GM18951 (cell line): ENCODE measurements at regions of chr11 and their contacts with region 1.

Region 1: GRCh38 chr11:93921695-93922468 is 71.5 kb upstream of the VSTM5 start:
- POLR2A ChIP-seq: no peak

Region 2: GRCh38 chr11:94493281-94494125 is 571.6 kb after region 1 on chr11 and contains the starts of genes ANKRD49 and MRE11:
- in situ Hi-C with region 1: loop called (anchors 25 kb)
- POLR2A ChIP-seq: peak; percentile 71